Activated naive CD4-positive, alpha-beta T cell treated with anti-CD3 and anti-CD28 coated beads for 36 hours (primary cell): ENCODE measurements at regions of chr5 and their contacts with region 1.

Region 1: DNA sequence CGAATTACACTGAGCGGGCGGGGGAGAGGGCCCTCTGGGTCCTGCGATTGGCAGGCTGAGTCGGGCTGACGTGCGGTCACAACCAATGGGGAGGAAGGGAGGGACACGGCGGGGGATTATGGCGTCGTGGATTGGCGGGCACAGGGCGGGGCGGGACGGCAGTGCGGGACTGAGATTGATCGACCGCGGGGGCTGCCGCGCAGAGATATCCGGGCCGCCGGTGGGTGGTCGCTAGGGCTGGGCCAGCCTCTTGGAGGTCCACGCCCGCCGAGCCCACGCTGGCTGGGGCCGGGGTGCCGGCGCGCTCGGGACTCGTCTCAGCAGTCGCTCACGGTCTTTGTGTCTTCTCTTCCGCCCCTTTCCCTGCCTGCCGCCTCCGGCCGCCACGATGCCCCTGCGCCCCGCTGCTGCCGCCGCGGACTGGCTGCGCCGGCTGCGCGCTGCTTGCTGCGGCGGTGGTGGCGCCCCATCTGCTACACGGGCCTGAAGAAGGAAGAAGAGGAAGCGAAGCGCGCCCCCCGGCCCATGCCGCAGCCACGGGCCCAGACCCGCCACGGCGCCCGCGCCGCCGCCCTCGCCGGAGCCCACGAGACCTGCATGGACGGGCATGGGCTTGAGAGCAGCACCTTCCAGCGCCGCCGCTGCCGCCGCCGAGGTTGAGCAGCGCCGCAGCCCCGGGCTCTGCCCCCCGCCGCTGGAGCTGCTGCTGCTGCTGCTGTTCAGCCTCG is at the start of gene RGMB:
- DNase-seq: peak; percentile 96
- H3K4me3 Mint-ChIP-seq: peak within 1 kb of the TSS; percentile 99
- H3K27ac Mint-ChIP-seq: peak within 1 kb of the TSS; percentile 77
- H3K4me1 Mint-ChIP-seq: peaks cover 36% of the 10 kb centered on the region
- H3K27me3 Mint-ChIP-seq: peaks cover 10% of the 10 kb centered on the region
- total RNA-seq, gene RGMB: 5.0 to 5.9 TPM

Region 2: DNA sequence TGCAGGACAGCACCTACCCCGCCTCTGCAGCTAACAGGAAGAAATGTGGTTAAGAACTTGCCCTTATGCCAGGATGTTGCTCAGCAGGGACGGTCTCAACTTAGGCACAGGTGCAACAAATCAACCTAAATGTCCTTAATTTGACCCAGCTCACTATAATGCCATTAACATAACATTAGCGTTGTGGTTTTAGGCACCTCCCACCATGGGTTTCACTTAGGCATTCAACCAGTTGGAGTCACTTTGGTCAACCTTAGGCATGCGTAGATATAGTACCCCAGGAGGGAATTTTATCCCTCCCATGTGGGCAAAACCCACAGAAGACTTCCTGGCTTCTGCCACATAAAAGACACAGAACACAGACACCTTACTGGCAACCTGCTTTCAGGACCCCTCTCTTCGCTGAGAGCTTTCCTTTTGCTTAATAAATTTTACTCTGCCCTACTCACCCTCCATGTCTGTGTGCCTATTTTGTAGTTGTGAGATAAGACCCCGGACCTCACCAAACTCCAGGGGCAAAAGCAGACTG is 1957.2 kb before region 1 on chr5:
- CTCF ChIA-PET with region 1: no interaction called
- intact Hi-C with region 1: loop called (anchors 5 kb)
- DNase-seq: peak; percentile 84
- H3K4me3 Mint-ChIP-seq: peak overlapping the region; percentile 71
- H3K27ac Mint-ChIP-seq: peak overlapping the region; percentile 91
- H3K4me1 Mint-ChIP-seq: peaks cover 80% of the 10 kb centered on the region
- H3K27me3 Mint-ChIP-seq: no peaks in the 10 kb centered on the region

Region 3: GRCh38 chr5:97297063-97297703 is 1476.4 kb before region 1 on chr5:
- CTCF ChIA-PET with region 1: no interaction called
- intact Hi-C with region 1: loop called (anchors 2 kb)
- DNase-seq: peak; percentile 36
- H3K4me3 Mint-ChIP-seq: no peak overlapping the region
- H3K27ac Mint-ChIP-seq: no peak overlapping the region
- H3K4me1 Mint-ChIP-seq: no peaks in the 10 kb centered on the region
- H3K27me3 Mint-ChIP-seq: no peaks in the 10 kb centered on the region

Region 4: GRCh38 chr5:97547999-97548738 is 1225.5 kb before region 1 on chr5:
- CTCF ChIA-PET with region 1: no interaction called
- intact Hi-C with region 1: loop called (anchors 1 kb)
- DNase-seq: peak; percentile 11
- H3K4me3 Mint-ChIP-seq: no peak overlapping the region
- H3K27ac Mint-ChIP-seq: peak overlapping the region; percentile 6
- H3K4me1 Mint-ChIP-seq: peaks cover 18% of the 10 kb centered on the region
- H3K27me3 Mint-ChIP-seq: peaks cover 3% of the 10 kb centered on the region

Region 5: DNA sequence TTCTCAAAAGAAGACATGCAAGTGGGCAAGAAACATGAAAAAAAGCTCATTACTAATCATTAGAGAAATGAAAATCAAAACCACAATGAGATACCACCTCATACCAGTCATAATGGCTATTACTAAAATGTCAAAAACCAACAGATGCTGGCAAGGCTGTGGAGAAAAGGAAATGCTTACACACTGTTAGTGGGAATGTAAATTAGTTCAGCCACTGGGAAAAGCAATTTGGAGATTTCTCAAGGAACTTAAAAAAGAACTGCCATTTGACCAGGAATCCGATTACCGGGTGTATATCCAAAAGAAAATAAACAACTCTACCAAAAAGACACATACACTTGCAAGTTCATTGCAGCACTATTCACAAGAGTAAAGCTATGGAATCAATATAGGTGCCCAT is 995.2 kb before region 1 on chr5:
- CTCF ChIA-PET with region 1: no interaction called
- intact Hi-C with region 1: no loop called
- DNase-seq: no peak
- H3K4me3 Mint-ChIP-seq: no peak overlapping the region
- H3K27ac Mint-ChIP-seq: no peak overlapping the region
- H3K4me1 Mint-ChIP-seq: no peaks in the 10 kb centered on the region
- H3K27me3 Mint-ChIP-seq: no peaks in the 10 kb centered on the region

Region 6: DNA sequence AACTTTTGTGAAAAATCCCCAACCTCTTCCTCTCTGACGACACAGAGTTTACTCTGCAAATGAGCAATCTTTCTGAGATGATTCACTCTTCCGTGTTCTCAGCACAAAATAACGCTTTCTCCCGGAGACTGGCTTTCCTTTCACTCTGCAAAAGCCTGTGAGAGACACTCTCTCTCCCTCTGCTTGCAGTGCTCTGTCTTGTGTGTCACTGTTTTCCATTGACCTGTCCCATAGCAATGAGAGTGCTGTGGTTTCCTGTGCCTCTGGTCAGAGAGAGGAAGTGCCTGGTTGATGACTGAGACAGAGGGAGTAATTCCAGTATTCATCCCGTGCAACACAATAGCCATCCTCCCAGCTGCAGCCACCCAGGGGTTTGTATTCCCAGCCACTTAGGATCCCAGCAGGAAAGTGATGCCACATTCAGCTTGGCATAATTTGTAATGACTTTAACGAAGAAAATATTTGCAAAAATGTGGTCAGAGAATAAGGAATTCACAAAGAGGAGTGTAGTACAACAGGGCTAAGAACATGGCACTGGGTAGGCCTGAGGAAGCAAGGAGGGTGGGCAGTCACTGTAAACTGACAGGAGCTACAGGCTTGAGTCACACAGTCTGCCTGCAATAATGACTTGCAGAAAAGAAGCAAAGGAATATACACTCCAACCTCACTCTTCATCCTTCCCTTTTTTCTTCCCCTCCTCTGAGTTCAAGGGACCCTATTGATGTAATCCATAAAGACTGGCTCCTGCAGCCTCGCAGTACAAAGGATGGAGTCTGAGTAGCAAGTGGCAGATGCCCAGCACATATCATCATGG is 463.6 kb before region 1 on chr5:
- CTCF ChIA-PET with region 1: no interaction called
- intact Hi-C with region 1: loop called (anchors 2 kb)
- DNase-seq: peak; percentile 39
- H3K4me3 Mint-ChIP-seq: no peak overlapping the region
- H3K27ac Mint-ChIP-seq: peak overlapping the region; percentile 22
- H3K4me1 Mint-ChIP-seq: peaks cover 8% of the 10 kb centered on the region
- H3K27me3 Mint-ChIP-seq: peaks cover 7% of the 10 kb centered on the region

Region 7: GRCh38 chr5:98928873-98929696 is 155.5 kb after region 1 on chr5 and contains the start of gene CHD1:
- CTCF ChIA-PET with region 1: no interaction called
- intact Hi-C with region 1: loop called (anchors 1 kb)
- DNase-seq: peak; percentile 97
- H3K4me3 Mint-ChIP-seq: peak within 1 kb of the TSS; percentile 93
- H3K27ac Mint-ChIP-seq: peak within 1 kb of the TSS; percentile 100
- H3K4me1 Mint-ChIP-seq: peaks cover 57% of the 10 kb centered on the region
- H3K27me3 Mint-ChIP-seq: no peaks in the 10 kb centered on the region
- total RNA-seq, gene CHD1: 50.5 to 52.1 TPM